ENCODE measurements at regions of chr1 and their contacts with region 1.

Region 1: GRCh38 chr1:89632657-89633247 is at the start of gene LRRC8C:
- DNase-seq: peak; percentile 93
- ATAC-seq: peak; percentile 88
- H3K4me3 ChIP-seq: peak within 1 kb of the TSS; percentile 70 to 95 (median 88)
- H3K4me3 Mint-ChIP-seq: peak within 1 kb of the TSS; percentile 97
- H3K27ac ChIP-seq: peak within 1 kb of the TSS; percentile 83 to 88
- H3K27ac Mint-ChIP-seq: peak within 1 kb of the TSS; percentile 97
- H3K4me1 ChIP-seq: peaks cover 15 to 23% of the 10 kb centered on the region in 2 donors
- H3K4me1 Mint-ChIP-seq: peaks cover 45% of the 10 kb centered on the region
- H3K27me3 ChIP-seq: no peaks in the 10 kb centered on the region
- H3K27me3 Mint-ChIP-seq: no peaks in the 10 kb centered on the region
- CTCF ChIP-seq: peak; percentile 64
- total RNA-seq, gene LRRC8C: 6.7 and 6.8 TPM in 2 replicates

Region 2: DNA sequence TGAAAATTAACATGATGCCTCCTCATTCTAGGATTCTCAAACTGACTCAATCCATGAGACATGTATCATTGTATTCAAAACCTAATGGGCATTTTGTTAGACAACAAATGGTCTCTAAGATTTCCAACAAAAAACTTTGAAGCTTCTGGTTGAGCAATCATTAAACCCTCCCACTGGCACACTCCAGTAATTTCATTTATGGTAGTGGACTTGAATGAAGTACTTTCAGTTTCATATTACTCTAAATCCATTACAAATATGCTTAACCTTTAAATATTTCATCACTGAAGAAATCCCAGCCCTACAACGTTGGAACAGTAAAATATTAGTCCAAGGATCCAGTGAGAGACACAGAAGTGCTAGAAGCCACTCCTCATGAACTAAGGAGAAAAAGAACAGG is 225.4 kb before region 1 on chr1:
- CTCF ChIA-PET with region 1: no interaction called
- POLR2A ChIA-PET with region 1: no interaction called
- intact Hi-C with region 1: no loop called
- DNase-seq: no peak
- ATAC-seq: no peak
- H3K4me3 ChIP-seq: no peak overlapping the region
- H3K4me3 Mint-ChIP-seq: peak overlapping the region; percentile 6
- H3K27ac ChIP-seq: no peak overlapping the region
- H3K27ac Mint-ChIP-seq: no peak overlapping the region
- H3K4me1 ChIP-seq: peaks cover 4 to 9% of the 10 kb centered on the region in 2 donors
- H3K4me1 Mint-ChIP-seq: peaks cover 17% of the 10 kb centered on the region
- H3K27me3 ChIP-seq: peaks cover 0 to 2% (median 0%) of the 10 kb centered on the region in 4 experiments
- H3K27me3 Mint-ChIP-seq: peaks cover 25% of the 10 kb centered on the region
- CTCF ChIP-seq: no peak

Region 3: DNA sequence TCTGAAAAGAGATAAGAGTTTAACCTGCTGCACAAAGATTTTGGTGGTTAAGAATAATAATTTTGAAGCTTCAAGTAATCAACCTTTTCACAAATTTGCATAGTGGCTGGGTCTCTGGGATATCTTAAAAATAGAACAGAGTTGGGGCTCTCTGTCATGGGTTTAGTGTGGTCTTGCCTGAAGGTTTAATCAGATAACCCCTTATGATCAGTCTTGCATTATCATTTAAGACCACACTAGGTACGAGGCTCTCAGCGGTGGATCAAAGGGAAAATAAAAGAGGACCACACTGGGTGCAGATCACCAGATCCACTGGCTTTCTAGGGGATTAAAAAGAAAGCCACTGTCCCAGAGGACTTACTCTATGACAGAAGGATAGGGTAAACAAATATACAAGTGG is 19.6 kb after region 1 on chr1:
- CTCF ChIA-PET with region 1: interaction called, 3 read pairs
- POLR2A ChIA-PET with region 1: interaction called, 3 read pairs
- intact Hi-C with region 1: loop called (anchors 2 kb)
- DNase-seq: no peak
- ATAC-seq: no peak
- H3K4me3 ChIP-seq: no peak overlapping the region
- H3K4me3 Mint-ChIP-seq: no peak overlapping the region
- H3K27ac ChIP-seq: no peak overlapping the region
- H3K27ac Mint-ChIP-seq: peak overlapping the region; percentile 8
- H3K4me1 ChIP-seq: peaks cover 7 to 27% of the 10 kb centered on the region in 2 donors
- H3K4me1 Mint-ChIP-seq: peaks cover 48% of the 10 kb centered on the region
- H3K27me3 ChIP-seq: no peaks in the 10 kb centered on the region
- H3K27me3 Mint-ChIP-seq: no peaks in the 10 kb centered on the region
- CTCF ChIP-seq: no peak

Region 4: DNA sequence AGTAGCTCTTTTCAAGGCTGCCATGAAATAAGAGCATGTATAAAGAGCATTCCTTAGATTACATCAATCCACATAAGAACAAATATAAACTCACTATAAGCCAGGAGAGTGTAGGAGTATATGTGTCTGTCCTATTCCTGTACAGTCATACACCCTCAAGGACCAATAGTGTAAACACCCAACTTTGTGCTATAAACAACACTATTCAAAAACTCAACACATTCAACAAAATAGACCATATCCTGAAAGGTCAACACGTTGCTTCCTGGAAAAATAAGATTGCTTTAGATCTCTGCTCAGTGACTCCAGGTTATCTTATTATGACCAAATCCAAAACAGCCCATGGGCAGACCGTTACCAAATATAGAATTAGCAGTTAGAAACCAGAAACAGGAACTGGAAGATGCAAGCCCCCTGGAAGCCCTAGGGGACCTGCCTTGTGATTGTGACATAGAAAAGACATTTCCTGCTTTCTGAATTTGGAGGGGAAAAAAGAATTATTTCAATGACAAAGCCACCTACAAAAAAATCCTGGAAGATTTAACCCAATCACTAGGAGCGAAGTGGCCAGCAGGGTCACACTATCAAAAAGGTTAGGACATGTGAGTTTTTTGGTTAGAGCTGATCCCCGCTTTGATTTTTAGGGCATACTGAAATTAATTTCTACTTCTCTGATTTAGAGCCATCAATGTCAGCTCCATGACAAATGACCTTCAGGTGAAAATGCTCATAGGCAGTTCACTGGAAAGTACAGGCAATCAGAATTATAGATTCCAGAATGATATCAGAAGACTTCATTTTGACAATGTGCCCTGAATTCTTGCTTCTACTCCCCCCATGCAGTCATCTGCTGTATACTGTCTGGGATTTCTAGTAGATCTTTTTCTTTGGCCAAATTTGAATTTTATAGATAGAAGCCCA is 60.1 kb after region 1 on chr1:
- CTCF ChIA-PET with region 1: interaction called, 3 read pairs
- POLR2A ChIA-PET with region 1: no interaction called
- intact Hi-C with region 1: loop called (anchors 2 kb)
- DNase-seq: peak; percentile 77
- ATAC-seq: peak; percentile 63
- H3K4me3 ChIP-seq: peak overlapping the region in 1 of 5 experiments; percentile 6
- H3K4me3 Mint-ChIP-seq: peak overlapping the region; percentile 35
- H3K27ac ChIP-seq: peak overlapping the region; percentile 68 to 93
- H3K27ac Mint-ChIP-seq: peak overlapping the region; percentile 42
- H3K4me1 ChIP-seq: peaks cover 37 to 48% of the 10 kb centered on the region in 2 donors
- H3K4me1 Mint-ChIP-seq: peaks cover 54% of the 10 kb centered on the region
- H3K27me3 ChIP-seq: no peaks in the 10 kb centered on the region
- H3K27me3 Mint-ChIP-seq: no peaks in the 10 kb centered on the region
- CTCF ChIP-seq: no peak

Region 5: DNA sequence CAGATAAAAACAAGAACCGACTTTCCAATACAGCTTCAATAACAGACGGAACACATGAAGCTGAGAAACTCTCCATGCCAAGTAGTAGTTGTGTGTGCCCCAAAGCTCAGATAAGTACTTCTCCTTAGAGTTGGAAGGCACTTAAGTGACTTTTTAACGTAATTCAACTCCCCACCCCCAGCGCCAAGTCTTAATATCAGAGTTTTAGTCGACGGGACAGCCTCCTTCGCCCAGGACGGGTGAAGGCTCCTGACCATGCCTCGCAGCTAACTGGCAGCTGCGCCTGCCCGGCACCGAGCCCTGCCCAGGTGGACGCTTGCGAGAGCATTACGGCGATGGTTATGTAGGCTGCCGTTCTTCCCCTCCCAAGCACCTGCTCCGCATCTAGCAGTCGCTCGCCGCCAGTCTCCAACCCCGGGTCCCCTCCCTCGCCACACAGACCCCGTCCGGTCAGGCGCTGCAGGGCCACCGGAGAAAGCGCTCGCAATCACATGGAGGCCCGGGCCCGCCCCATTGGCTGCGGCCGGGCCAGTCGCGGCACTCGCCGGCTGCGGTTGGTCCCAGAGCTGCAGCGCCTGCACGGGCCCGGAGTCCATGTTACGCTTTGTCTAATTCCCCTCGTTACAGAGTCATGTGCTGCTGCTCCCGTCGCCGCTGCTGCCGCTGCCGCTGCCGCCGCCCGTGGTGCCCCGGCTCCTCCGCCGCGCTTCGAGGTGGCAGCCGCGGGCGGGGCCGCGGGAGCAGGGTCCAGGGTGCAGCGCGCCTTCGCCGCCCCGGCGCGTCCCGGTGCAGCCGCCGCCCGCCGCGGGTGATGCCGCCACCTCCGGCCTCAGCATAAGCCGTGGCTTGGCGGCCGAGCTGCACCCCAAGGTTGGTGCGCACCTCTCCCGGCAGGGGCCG is 187.9 kb after region 1 on chr1 and contains the start of gene LRRC8D:
- CTCF ChIA-PET with region 1: no interaction called
- POLR2A ChIA-PET with region 1: no interaction called
- intact Hi-C with region 1: loop called (anchors 1 kb)
- DNase-seq: peak; percentile 85
- ATAC-seq: peak; percentile 66
- H3K4me3 ChIP-seq: peak within 1 kb of the TSS; percentile 65 to 87 (median 76)
- H3K4me3 Mint-ChIP-seq: peak within 1 kb of the TSS; percentile 90
- H3K27ac ChIP-seq: peak within 1 kb of the TSS; percentile 68 to 73
- H3K27ac Mint-ChIP-seq: peak within 1 kb of the TSS; percentile 92
- H3K4me1 ChIP-seq: peaks cover 25 to 30% of the 10 kb centered on the region in 2 donors
- H3K4me1 Mint-ChIP-seq: peaks cover 46% of the 10 kb centered on the region
- H3K27me3 ChIP-seq: no peaks in the 10 kb centered on the region
- H3K27me3 Mint-ChIP-seq: no peaks in the 10 kb centered on the region
- CTCF ChIP-seq: no peak
- total RNA-seq, gene LRRC8D: 46.8 and 47.0 TPM in 2 replicates

Region 6: GRCh38 chr1:89929467-89930063 is 296.8 kb after region 1 on chr1:
- CTCF ChIA-PET with region 1: no interaction called
- POLR2A ChIA-PET with region 1: no interaction called
- intact Hi-C with region 1: no loop called
- DNase-seq: no peak
- ATAC-seq: no peak
- H3K4me3 ChIP-seq: no peak overlapping the region
- H3K4me3 Mint-ChIP-seq: no peak overlapping the region
- H3K27ac ChIP-seq: no peak overlapping the region
- H3K27ac Mint-ChIP-seq: no peak overlapping the region
- H3K4me1 ChIP-seq: peaks cover 0 to 8% of the 10 kb centered on the region in 2 donors
- H3K4me1 Mint-ChIP-seq: peaks cover 26% of the 10 kb centered on the region
- H3K27me3 ChIP-seq: no peaks in the 10 kb centered on the region
- H3K27me3 Mint-ChIP-seq: no peaks in the 10 kb centered on the region
- CTCF ChIP-seq: no peak

Region 7: GRCh38 chr1:89994805-89995597 is 362.2 kb after region 1 on chr1 and contains the start of gene ZNF326:
- CTCF ChIA-PET with region 1: no interaction called
- POLR2A ChIA-PET with region 1: no interaction called
- intact Hi-C with region 1: loop called (anchors 1 kb)
- DNase-seq: peak; percentile 94
- ATAC-seq: peak; percentile 97
- H3K4me3 ChIP-seq: peak within 1 kb of the TSS; percentile 72 to 95 (median 80)
- H3K4me3 Mint-ChIP-seq: peak within 1 kb of the TSS; percentile 99
- H3K27ac ChIP-seq: peak within 1 kb of the TSS; percentile 85 to 87
- H3K27ac Mint-ChIP-seq: peak within 1 kb of the TSS; percentile 96
- H3K4me1 ChIP-seq: peaks cover 8 to 12% of the 10 kb centered on the region in 2 donors
- H3K4me1 Mint-ChIP-seq: peaks cover 32% of the 10 kb centered on the region
- H3K27me3 ChIP-seq: no peaks in the 10 kb centered on the region
- H3K27me3 Mint-ChIP-seq: no peaks in the 10 kb centered on the region
- CTCF ChIP-seq: no peak
- total RNA-seq, gene ZNF326: 32.0 and 34.1 TPM in 2 replicates